ENCODE measurements at regions of chr6 and their contacts with region 1.

Region 1: DNA sequence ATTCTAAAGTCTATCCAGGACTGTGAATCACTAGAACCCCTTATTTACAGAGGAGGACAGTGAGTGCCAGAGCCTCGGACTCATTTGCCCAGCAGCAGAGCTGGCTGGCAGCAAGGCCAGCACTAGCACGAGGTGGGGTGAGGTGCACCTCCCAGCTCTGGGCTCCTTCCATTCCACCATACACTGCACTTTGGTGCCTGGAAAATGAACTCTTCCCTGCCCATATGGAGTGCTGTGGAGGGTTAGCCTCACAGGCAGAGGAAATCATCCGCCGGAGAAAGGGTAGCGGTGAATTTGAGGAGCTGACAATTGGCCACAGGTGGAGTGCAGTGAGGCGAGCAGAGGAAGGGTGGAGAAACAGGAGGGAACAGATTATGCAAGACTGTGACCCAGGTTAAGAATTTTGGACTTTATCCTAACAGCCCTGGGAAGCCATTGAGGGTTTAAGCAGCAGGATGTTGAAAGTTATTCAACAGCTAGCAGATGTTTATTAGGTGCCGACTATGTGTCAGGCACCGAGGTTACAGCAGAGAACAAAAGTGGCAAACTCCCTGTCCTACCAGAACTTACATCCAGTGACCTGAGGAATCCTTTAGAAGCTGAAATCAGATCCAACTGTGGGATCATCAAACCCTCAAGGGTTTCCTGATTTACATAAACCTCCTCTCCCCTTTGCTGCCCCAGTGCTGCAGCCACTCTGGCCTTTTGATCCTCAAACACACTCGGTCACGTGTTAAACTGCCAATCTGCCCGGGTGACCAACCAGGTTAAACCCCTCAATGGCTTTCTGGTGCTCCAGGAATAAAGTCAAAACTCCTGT is 6.2 kb downstream of the TRIM26 start:
- DNase-seq: no peak
- H3K4me3 ChIP-seq: no peak overlapping the region
- H3K27me3 ChIP-seq: no peaks in the 10 kb centered on the region
- CTCF ChIP-seq: no peak

Region 2: DNA sequence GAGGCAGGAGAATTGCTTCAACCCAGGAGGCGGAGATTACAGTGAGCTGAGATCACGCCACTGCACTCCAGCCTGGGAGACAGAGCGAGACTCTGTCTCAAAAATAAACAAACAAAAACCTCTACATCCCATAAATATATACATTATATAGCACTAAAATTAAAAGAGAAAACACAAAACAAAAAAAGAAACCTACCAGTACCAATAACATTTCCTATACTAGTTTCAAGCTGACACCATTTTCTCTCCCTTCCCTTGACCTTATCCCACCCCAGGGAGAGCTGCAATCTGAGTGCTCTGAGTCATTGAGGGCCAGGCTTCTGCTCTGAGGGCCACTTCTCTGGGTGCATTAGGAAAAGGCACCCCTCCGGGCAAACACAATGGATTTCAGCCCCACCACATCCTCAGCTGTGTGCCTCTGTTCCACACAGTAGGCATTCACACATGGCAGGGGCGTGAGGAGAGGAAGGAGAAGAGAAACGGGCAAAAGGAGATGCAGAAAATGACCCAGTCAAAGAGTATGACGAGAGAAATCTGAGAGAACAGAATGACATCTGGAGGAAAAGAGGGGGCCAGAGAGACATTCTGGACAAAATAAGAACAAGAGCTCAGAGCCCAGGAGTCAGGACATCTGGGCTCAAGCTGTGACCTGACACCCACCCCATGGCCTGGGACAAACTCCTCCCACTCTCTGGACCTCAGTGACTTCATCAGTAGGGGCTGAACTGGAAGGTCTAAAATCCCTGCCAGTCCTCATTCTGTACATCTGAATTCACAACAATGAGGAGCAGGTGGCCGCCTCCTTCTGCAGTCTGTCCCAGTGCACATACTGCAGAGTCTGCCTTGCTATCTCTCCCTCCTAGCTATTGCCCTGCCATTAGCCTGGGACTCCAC is 12.0 kb before region 1 on chr6:
- CTCF ChIA-PET with region 1: interaction called, 17 read pairs
- POLR2A ChIA-PET with region 1: no interaction called
- DNase-seq: no peak
- H3K4me3 ChIP-seq: no peak overlapping the region
- H3K27me3 ChIP-seq: no peaks in the 10 kb centered on the region
- CTCF ChIP-seq: no peak

Region 3: DNA sequence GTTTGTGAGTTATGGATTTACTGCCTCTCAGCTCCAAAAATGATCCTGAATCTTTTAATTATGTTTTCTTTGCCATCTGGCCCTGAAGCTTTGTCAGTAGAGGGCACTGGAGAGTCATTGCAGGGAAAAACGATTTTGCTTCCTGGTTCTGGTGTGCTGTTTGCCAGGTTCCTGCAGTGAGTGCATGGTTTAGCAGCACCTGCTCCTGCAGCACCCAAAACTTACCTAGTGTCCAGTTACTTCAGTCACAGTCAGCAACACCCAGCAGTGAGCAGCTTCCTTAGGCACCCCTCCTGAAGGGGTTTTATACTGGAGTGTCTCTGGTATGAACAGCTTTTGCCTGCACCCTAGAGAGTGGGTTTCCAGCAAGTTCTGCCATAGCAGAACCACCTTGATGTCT is 12.2 kb after region 1 on chr6:
- CTCF ChIA-PET with region 1: interaction called, 12 read pairs
- POLR2A ChIA-PET with region 1: no interaction called
- DNase-seq: no peak
- H3K4me3 ChIP-seq: no peak overlapping the region
- H3K27me3 ChIP-seq: no peaks in the 10 kb centered on the region; the same call in none of the 2 replicates
- CTCF ChIP-seq: peak; percentile 93